Activated CD4-positive, alpha-beta T cell treated with anti-CD3 and anti-CD28 coated beads for 36 hours (primary cell): ENCODE measurements at regions of chr11 and their contacts with region 1.

Region 1: GRCh38 chr11:36409152-36409816 is 100.8 kb downstream of the TRAF6 start:
- DNase-seq: peak; percentile 61
- ATAC-seq: peak; percentile 83
- H3K4me3 Mint-ChIP-seq: peak overlapping the region; percentile 17
- H3K27ac Mint-ChIP-seq: peak overlapping the region; percentile 91
- H3K4me1 Mint-ChIP-seq: peaks cover 59% of the 10 kb centered on the region
- H3K27me3 Mint-ChIP-seq: no peaks in the 10 kb centered on the region

Region 2: GRCh38 chr11:36304351-36304750 is 104.9 kb before region 1 on chr11:
- CTCF ChIA-PET with region 1: no interaction called
- POLR2A ChIA-PET with region 1: no interaction called
- intact Hi-C with region 1: no loop called
- DNase-seq: no peak
- ATAC-seq: no peak
- H3K4me3 Mint-ChIP-seq: no peak overlapping the region
- H3K27ac Mint-ChIP-seq: no peak overlapping the region
- H3K4me1 Mint-ChIP-seq: peaks cover 10% of the 10 kb centered on the region
- H3K27me3 Mint-ChIP-seq: peaks cover 10% of the 10 kb centered on the region

Region 3: DNA sequence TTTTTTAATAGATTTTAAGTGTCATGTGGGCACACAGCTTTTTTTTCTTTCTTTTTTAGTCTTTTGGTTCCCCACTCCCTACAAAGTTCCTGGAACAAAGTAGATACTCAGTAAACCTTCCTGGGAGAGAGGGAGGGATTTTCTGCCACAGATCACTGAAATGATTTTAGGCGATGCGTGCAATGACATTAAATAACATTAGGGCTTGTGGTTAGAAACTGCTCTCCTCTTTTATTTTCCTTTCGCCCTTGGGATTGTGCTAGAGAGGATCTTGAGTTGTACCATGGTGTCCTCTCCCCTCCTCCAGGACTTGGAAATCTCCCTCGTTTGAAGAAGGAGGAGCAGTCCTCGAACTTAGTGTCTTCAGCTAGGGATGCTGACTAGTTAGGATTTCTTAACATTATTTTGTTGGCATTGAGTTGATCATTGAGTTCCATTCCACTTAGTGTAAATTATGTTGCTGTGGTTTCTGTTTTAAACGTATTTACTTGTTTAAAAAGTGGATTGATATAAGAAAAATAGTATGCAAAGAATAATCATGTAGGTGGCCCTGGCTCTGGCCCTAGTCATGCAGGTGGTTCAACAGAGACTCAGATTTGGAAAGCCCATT is 12.4 kb after region 1 on chr11:
- CTCF ChIA-PET with region 1: interaction called, 5 read pairs
- POLR2A ChIA-PET with region 1: no interaction called
- intact Hi-C with region 1: loop called in 1 of 2 experiments (anchors 1 kb)
- DNase-seq: no peak
- ATAC-seq: no peak
- H3K4me3 Mint-ChIP-seq: peak overlapping the region; percentile 41
- H3K27ac Mint-ChIP-seq: peak overlapping the region; percentile 94
- H3K4me1 Mint-ChIP-seq: peaks cover 54% of the 10 kb centered on the region
- H3K27me3 Mint-ChIP-seq: peaks cover 7% of the 10 kb centered on the region

Region 4: GRCh38 chr11:36854875-36855274 is 445.6 kb after region 1 on chr11:
- CTCF ChIA-PET with region 1: no interaction called
- POLR2A ChIA-PET with region 1: no interaction called
- intact Hi-C with region 1: no loop called
- DNase-seq: no peak
- ATAC-seq: no peak
- H3K4me3 Mint-ChIP-seq: no peak overlapping the region
- H3K27ac Mint-ChIP-seq: no peak overlapping the region
- H3K4me1 Mint-ChIP-seq: no peaks in the 10 kb centered on the region
- H3K27me3 Mint-ChIP-seq: no peaks in the 10 kb centered on the region